CD4-positive, alpha-beta memory T cell (primary cell): ENCODE measurements at regions of chr12 and their contacts with region 1.

Region 1: DNA sequence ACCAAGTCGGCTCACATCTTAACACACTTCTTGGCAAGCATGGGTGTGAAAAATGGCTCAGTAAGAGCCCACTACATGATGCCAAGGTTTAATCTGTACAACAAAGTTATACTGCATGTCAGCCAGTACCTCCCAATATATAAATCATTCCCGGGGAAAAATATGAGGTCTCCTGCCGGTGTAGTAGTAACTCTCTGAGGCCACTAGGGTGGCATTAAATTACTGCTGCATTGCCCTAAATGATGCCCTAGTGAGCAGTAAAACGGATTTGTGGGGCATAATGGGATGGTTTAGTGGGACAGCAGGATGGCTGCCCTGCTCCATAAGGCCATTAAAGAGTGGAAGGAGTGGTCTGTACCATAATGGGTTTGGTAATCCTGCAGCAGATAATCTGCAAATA is 267.7 kb downstream of the MED13L start:
- DNase-seq: no peak
- H3K4me3 ChIP-seq: no peak overlapping the region
- H3K4me3 Mint-ChIP-seq: no peak overlapping the region
- H3K27ac ChIP-seq: no peak overlapping the region
- H3K27ac Mint-ChIP-seq: peak overlapping the region in 2 of 7 donors; percentile 19 to 32
- H3K4me1 ChIP-seq: no peaks in the 10 kb centered on the region
- H3K4me1 Mint-ChIP-seq: peaks cover 0 to 2% (median 0%) of the 10 kb centered on the region in 4 donors
- H3K27me3 ChIP-seq: no peaks in the 10 kb centered on the region
- H3K27me3 Mint-ChIP-seq: no peaks in the 10 kb centered on the region

Region 2: GRCh38 chr12:114547636-114548035 is 1462.2 kb before region 1 on chr12:
- CTCF ChIA-PET with region 1: no interaction called
- POLR2A ChIA-PET with region 1: no interaction called
- intact Hi-C with region 1: no loop called
- DNase-seq: no peak
- H3K4me3 ChIP-seq: no peak overlapping the region
- H3K4me3 Mint-ChIP-seq: no peak overlapping the region
- H3K27ac ChIP-seq: no peak overlapping the region
- H3K27ac Mint-ChIP-seq: no peak overlapping the region
- H3K4me1 ChIP-seq: no peaks in the 10 kb centered on the region
- H3K4me1 Mint-ChIP-seq: no peaks in the 10 kb centered on the region
- H3K27me3 ChIP-seq: no peaks in the 10 kb centered on the region
- H3K27me3 Mint-ChIP-seq: no peaks in the 10 kb centered on the region

Region 3: DNA sequence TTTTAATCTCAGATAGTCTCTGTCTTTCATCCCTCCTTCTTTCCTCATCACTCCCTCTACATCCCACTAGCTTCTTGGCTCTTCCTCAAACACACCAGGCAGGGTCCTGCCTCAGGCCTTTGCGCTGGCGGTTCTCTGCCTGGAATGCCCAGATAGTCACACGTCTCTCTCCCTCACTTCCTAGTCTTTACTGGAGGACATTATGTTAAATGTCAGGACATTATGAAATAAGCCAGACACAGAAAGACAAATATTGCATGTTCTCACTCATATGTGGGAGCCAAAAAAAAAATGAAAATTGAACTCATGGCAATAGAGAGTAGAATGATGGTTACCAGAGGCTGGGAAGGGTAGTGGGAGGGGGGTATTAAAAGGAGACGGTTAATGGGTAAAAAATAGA is 174.4 kb before region 1 on chr12:
- CTCF ChIA-PET with region 1: no interaction called
- POLR2A ChIA-PET with region 1: no interaction called
- intact Hi-C with region 1: no loop called
- DNase-seq: no peak
- H3K4me3 ChIP-seq: no peak overlapping the region
- H3K4me3 Mint-ChIP-seq: no peak overlapping the region
- H3K27ac ChIP-seq: no peak overlapping the region
- H3K27ac Mint-ChIP-seq: no peak overlapping the region
- H3K4me1 ChIP-seq: no peaks in the 10 kb centered on the region
- H3K4me1 Mint-ChIP-seq: no peaks in the 10 kb centered on the region
- H3K27me3 ChIP-seq: no peaks in the 10 kb centered on the region
- H3K27me3 Mint-ChIP-seq: peaks cover 0 to 5% of the 10 kb centered on the region in 2 donors

Region 4: DNA sequence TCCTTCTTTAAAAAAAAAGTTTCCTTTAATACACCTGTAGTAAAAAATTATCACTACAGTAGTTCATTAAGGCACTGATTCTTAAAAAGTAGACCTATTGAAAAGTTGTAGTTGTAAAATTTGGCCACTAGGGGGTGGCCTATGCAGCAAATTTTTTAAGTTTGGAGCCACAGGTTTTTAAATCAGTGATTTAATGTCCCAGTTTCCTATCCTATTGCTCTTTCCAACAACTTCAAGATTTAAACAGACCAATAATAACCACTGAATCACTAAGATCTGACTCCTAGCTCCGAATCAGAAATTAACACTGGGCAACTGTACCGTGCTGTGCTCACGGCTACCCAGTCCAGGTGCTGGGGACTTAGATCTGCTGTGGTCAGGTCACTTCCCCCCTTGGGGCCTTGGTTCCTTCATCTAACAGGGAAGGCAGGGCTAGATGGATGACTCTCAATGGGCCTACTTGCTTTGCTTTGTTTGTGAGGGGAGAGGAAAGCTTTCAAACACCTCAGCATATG is 11.6 kb before region 1 on chr12:
- CTCF ChIA-PET with region 1: interaction called, 12 read pairs
- POLR2A ChIA-PET with region 1: no interaction called
- intact Hi-C with region 1: no loop called
- DNase-seq: peak in 4 of 5 donors; percentile 34 to 39 (median 36)
- H3K4me3 ChIP-seq: no peak overlapping the region
- H3K4me3 Mint-ChIP-seq: no peak overlapping the region
- H3K27ac ChIP-seq: no peak overlapping the region
- H3K27ac Mint-ChIP-seq: peak overlapping the region in 3 of 7 donors; percentile 22 to 60 (median 46)
- H3K4me1 ChIP-seq: no peaks in the 10 kb centered on the region
- H3K4me1 Mint-ChIP-seq: peaks cover 6 to 17% (median 9%) of the 10 kb centered on the region in 4 donors
- H3K27me3 ChIP-seq: no peaks in the 10 kb centered on the region
- H3K27me3 Mint-ChIP-seq: no peaks in the 10 kb centered on the region

Region 5: GRCh38 chr12:116818948-116819832 is 809.4 kb after region 1 on chr12:
- CTCF ChIA-PET with region 1: no interaction called
- POLR2A ChIA-PET with region 1: no interaction called
- intact Hi-C with region 1: no loop called
- DNase-seq: peak; percentile 92 to 93 (median 93)
- H3K4me3 ChIP-seq: peak overlapping the region; percentile 67 to 86
- H3K4me3 Mint-ChIP-seq: peak overlapping the region; percentile 92 to 96 (median 93)
- H3K27ac ChIP-seq: peak overlapping the region; percentile 87
- H3K27ac Mint-ChIP-seq: peak overlapping the region; percentile 96 to 100 (median 98)
- H3K4me1 ChIP-seq: peaks cover 17% of the 10 kb centered on the region
- H3K4me1 Mint-ChIP-seq: peaks cover 10 to 31% (median 22%) of the 10 kb centered on the region in 4 donors
- H3K27me3 ChIP-seq: no peaks in the 10 kb centered on the region
- H3K27me3 Mint-ChIP-seq: peaks cover 0 to 2% of the 10 kb centered on the region in 2 donors